AG04450 (cell line): ENCODE measurements at regions of chr17 and their contacts with region 1.

Region 1: DNA sequence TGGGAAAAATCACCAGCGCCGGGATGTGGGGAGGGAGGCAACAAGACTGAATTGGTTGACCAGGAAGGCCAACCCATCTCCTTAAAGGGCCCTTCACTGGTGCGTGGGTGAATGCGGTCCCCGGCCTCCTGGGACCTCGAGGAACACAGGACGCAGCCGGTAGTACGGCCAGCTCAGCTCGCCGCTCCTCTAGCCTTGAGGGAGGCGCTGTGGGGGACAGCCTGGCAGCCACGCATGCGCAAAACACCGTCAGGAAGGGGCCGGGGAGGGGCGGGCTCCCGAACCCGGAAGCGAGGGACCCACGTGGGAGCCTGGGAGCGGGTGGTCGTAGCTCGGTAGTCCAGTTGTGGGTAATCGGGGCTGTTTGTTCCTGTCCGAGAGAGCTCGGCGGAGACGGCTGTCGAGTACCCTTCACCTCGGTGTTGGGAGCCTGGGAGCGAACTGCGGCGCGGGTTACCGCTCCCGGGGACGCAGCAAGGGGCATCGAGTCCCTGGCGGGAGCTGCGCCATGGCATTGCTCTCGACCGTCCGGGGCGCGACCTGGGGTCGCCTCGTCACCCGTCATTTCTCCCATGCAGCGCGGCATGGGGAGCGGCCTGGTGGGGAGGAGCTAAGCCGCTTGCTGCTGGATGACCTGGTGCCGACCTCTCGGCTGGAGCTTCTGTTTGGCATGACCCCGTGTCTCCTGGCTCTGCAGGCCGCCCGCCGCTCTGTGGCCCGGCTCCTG is at the start of gene MRM1:
- DNase-seq: peak; percentile 76
- H3K4me3 ChIP-seq: peak within 1 kb of the TSS; percentile 95
- H3K27ac ChIP-seq: peak within 1 kb of the TSS; percentile 75
- H3K27me3 ChIP-seq: no peaks in the 10 kb centered on the region
- CTCF ChIP-seq: peak; percentile 16; the same call in 1 of the 2 replicates
- polyA plus RNA-seq, gene MRM1: 2.0 and 2.4 TPM in 2 replicates

Region 2: DNA sequence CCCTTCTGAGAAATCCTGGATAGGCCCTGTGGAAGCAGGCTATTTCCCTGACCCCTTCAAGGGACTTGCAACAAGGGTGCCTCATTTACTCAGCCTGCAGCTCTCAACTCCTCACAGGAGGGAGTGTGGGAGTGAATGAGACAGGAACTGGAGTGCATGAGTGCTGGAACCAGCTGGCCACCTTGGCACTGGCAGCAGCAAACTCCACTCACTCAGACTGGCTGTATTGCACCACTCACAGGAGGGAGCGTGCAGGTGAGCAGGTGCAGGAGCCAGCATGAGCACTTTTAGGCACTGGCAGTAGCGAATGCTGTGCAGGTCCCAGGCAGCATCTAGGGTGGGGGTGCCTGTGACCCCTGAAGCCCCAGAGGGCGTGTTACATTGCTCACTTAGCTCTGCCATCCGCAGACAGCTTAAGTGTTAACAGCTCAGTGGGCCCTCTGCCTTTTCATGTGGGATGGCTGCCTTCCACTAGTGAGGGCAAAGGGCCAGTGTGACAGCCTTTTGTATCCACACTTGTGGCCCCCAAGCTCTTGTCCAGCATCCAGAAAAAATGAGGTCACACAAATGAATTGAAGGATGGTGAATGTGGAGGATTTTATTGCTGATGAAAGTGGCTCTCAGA is 126.0 kb before region 1 on chr17:
- CTCF ChIA-PET with region 1: no interaction called
- POLR2A ChIA-PET with region 1: no interaction called
- DNase-seq: no peak
- H3K4me3 ChIP-seq: no peak overlapping the region
- H3K27ac ChIP-seq: no peak overlapping the region
- H3K27me3 ChIP-seq: peaks cover 7% of the 10 kb centered on the region
- CTCF ChIP-seq: no peak

Region 3: DNA sequence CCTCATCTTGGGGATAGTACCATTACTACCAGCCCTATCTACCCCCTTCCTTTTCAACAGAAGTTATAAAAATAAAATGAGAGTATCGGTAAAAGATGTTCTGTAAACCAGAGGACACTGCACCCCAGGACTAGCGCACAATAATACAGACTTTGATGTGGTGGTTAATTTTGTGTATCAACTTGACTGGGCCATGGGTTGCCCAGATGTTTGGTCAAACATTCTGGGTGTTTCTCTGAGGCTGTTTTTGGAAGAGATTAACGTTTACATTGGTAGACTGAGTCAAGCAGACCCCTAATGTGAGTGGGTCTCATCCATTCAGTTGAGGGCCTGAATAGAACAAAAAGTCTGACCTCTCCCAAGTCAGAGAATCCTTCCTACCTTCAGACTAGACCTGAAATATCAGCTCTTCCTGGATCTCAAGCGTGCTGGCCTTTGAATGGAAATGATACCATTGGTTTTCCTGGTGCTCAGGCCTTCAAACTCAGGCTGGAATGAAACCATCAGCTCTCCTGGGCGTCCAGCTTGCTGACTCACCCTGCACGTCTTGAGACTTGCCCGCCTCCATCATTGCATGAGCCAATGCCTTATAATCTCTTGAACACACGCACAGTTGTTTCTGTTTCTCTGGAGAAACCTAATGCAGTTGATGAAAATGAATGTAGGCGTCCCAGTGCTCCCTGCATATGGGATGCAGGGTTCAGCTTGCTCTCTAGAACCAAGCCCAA is 10.0 kb after region 1 on chr17:
- CTCF ChIA-PET with region 1: interaction called, 18 read pairs
- POLR2A ChIA-PET with region 1: no interaction called
- DNase-seq: peak; percentile 37
- H3K4me3 ChIP-seq: no peak overlapping the region
- H3K27ac ChIP-seq: peak overlapping the region; percentile 21
- H3K27me3 ChIP-seq: peaks cover 3% of the 10 kb centered on the region
- CTCF ChIP-seq: no peak

Region 4: DNA sequence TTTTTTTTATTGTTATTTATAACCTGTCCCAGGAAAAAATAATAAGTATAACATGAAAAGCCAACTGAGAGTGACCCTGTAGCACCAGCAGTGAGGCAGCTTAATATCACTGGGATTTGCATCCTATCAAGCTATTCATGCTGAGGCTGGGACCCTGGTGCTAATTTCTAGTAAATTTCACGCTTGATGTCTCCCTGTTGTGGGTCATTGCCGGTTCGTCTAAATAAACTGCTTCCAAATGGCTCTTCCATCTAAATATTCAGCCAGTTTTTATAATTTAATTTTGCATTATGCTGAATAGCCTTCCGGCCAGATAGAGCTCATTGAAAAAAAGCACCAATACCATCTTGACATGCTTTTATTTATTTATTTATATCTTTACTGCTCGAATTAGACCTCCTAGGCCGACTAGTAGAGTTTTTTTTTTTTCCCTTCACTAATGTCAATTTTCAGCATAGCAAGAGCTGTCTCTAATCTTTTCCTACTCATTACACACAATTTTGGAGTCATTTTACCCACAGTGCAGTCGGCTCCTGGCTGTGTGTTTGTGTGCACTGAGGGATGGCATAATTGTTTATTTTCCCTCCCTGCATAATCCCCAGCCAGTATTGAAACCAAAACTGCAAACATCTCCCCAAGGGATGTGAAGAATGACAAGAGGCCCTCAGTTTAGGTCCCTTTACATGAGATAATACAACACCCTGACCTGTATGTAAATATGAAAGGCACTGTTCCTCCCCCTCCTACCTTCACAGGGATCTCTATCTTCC is 516.1 kb after region 1 on chr17:
- CTCF ChIA-PET with region 1: interaction called, 10 read pairs
- POLR2A ChIA-PET with region 1: no interaction called
- DNase-seq: no peak
- H3K4me3 ChIP-seq: no peak overlapping the region
- H3K27ac ChIP-seq: no peak overlapping the region
- H3K27me3 ChIP-seq: no peaks in the 10 kb centered on the region
- CTCF ChIP-seq: no peak

Region 5: DNA sequence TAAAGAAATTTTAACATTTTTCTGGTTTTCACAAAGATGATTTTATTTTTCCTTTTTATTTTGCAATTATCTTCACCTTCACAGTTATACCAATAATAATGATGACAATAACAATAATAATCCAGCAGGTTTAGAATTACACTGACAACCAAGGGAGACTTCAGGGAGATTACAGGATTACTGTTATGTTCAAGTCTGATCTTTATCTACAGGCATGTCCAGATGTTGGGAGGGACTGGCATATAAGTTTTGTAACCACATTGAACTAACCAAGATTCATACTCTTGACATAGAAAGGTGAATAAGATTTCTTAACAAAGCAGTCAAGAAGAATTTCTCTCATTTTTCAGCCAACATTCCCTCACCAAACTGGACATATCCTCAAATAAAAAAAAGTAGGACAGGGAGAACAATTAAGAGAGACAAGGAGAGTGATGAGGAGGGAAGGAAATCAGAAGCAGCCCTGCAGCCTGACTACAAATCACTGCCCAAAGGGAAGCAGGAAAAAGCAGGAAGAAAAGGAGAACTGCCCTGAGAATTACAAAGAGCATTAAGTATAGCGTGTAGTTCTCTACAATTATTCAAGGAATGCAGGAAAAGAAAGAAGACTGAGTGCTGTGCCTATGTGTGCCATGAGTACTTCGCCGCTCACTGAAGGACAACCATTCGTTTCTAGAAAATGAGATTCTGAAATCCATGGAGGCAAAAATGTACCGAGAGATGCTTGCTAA is 618.6 kb after region 1 on chr17:
- CTCF ChIA-PET with region 1: interaction called, 23 read pairs
- POLR2A ChIA-PET with region 1: interaction called, 3 read pairs
- DNase-seq: no peak
- H3K4me3 ChIP-seq: no peak overlapping the region
- H3K27ac ChIP-seq: no peak overlapping the region
- H3K27me3 ChIP-seq: no peaks in the 10 kb centered on the region
- CTCF ChIP-seq: no peak

Region 6: DNA sequence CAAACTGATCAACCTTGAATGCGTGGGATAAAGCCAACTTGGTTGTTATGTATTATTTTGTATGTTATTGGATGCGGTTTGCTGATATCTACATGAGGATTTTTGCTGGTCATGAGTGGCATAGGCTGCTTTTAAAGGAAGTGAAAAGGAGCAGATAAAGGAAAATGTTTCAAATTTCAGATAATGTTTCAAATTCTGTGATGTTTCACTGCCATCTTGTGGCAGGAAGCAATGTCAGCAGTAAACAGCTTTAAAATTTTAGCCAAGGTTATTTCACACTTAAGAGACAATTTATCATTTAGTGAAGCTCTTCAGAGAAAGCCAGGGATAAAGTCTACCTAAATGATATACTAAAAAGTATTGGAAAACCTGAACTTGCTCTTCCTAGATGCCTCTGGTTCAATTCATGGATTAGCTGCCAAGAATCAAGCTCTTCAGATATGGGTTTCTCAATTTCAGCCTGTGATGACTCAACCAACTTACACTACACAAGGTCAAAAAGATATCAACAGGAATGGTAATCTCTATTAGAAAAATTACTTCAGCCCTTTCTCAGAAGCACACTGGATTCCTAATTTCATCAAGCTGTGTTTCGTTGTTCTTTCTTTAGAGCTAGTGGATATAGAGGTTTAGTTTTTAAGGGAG is 638.3 kb after region 1 on chr17:
- CTCF ChIA-PET with region 1: interaction called, 77 read pairs
- POLR2A ChIA-PET with region 1: no interaction called
- DNase-seq: no peak
- H3K4me3 ChIP-seq: no peak overlapping the region
- H3K27ac ChIP-seq: no peak overlapping the region
- H3K27me3 ChIP-seq: no peaks in the 10 kb centered on the region
- CTCF ChIP-seq: peak; percentile 80